Posterior vena cava (tissue), 2 donors: ENCODE measurements at regions of chr16 and their contacts with region 1.

Region 1: DNA sequence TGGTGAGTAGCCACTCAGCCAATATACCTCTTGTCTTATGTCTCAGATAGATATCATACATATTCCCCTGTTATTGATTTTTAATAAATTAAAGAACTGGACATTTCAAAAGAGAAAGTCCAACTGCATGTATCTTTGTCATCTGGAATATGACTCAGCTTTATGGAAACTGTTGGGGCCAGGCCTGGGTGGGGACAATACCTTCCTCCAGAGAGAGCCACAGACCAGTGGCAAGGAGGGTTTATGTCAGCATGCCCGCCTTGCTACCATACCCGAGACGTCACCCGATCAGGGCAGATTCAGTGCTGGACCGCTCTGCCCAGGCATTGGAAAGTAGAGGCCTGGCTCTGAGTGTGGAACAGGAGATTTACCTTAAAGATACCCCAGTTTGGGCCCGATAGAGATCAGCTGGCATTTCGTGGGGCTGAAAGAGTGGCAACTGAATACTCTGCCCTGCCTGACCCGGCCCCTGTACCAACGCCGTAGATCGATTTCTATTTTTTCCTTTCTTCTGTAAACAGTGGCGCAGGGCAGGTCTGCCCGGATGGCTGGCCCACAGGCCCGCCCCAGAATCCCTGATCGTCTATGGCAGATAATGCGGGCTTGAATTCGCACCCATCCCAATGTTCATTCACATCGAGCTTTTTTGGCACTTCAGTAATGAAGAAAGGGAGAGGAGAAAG is 158.6 kb downstream of the SALL1 start:
- DNase-seq: no peak

Region 2: DNA sequence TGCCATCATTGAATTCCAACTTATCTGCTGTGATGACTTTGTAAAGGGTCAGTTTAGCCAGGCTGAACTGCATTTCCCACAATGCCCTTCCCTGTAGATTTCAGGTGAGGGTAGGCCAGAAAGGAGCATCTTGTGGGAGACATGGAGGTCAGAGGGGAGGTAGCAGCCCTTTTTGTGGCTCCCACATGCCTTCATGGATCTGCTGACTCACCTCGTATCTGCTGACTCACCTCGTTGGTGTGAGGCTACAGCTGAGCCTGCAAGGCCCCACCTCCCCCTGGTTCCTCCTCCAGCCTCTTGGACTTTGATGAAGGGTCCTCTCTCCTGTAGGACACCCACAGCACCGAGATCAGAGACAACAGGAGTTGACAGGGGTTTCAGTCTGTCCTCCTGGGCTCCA is 56.1 kb after region 1 on chr16:
- intact Hi-C with region 1: no loop called
- DNase-seq: no peak

Region 3: DNA sequence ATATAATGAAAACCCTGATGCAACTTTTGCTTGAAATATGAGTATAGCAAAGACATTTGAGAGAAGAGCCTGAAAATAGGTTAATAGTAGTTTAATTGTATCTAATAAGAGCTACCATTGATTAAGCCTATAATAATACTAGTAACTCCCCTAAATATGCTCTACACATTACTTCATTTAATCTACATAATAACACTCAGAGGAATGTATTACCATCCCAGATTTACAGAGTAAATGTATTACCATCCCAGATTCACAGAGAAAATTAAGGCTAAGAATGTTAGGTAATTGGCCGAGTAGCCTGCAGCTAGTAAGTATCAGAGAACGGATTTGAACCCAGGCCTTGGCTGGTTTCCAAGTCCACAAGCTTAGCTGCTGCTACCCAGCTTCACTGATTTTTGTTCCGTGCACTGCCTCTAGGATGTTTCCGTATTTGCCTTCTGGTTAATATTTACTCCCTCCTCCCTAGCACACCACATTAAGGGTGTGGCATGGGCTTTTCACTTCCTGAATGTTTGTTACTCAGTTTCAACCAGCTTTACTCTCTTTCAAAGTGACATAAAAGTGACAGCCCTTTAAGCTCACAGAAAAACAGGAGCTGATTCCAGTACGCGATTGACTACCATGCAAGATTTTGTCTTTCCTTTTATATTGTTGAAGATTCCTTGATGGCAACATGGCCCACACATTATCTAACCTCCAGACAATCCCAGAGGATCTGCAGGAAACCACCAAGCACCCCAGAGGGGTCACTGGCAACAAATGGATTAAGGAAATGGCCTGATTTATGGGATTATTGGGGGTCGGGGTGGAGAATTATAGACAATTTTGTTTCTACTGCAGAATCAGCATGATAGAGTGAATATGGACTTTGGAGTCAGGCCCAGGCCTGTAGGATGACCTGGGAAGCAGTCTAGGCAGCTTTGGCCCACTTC is 1581.1 kb after region 1 on chr16:
- intact Hi-C with region 1: loop called in 1 of 2 experiments (anchors 5 kb)
- DNase-seq: no peak